K562 (cell line): ENCODE measurements at regions of chr1 and their contacts with region 1.

Region 1: GRCh38 chr1:187848321-187848720 is 1019.6 kb downstream of the PLA2G4A start:
- DNase-seq: no peak
- ATAC-seq: no peak
- H3K4me3 ChIP-seq: no peak overlapping the region
- H3K27ac ChIP-seq: no peak overlapping the region
- H3K4me1 ChIP-seq: no peaks in the 10 kb centered on the region
- H3K27me3 ChIP-seq: no peaks in the 10 kb centered on the region
- CTCF ChIP-seq: no peak
- EP300 ChIP-seq: no peak
- POLR2A ChIP-seq: no peak
- RAD21 ChIP-seq: no peak

Region 2: DNA sequence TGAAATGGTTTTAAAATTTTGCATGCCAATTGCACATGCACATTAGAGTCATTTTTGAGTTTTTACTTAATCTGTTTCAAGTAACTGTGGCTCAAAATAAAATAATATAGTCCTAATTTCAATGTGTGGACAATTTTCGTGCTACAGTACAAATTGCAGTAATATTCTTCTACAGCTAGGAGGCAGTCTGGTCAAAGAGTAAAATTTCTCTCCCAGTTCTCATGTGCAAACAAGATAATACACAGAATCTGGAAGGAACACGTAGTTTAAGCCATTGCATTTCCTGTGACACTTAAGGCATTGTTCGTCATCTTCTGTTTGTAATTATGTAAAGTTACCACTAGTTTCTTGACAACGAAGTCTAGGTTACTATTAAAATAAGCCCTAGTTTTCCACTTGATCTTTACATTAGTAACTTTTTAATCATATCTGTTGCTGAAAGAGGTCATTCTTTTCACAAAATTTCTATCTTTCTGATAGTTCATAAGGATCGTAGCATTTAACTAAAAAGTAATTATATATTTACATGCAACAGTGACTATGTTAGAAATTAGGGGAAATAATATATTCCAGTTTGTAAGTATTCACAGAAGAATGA is 1443.8 kb before region 1 on chr1:
- CTCF ChIA-PET with region 1: no interaction called
- POLR2A ChIA-PET with region 1: no interaction called
- in situ Hi-C with region 1: no loop called
- intact Hi-C with region 1: loop called (anchors 5 kb)
- DNase-seq: peak; percentile 44 to 69 (median 56)
- ATAC-seq: peak; percentile 86
- H3K4me3 ChIP-seq: no peak overlapping the region
- H3K27ac ChIP-seq: peak overlapping the region; percentile 20; the same call in 1 of the 3 replicates
- H3K4me1 ChIP-seq: no peaks in the 10 kb centered on the region; a peak in 1 of 5 replicates
- H3K27me3 ChIP-seq: no peaks in the 10 kb centered on the region
- CTCF ChIP-seq: peak; percentile 60 to 86 (median 81); a peak in 5 of 6 replicates
- EP300 ChIP-seq: no peak
- POLR2A ChIP-seq: no peak
- RAD21 ChIP-seq: peak; percentile 70 to 74